PC-3 (cell line): ENCODE measurements at regions of chr6 and their contacts with region 1.

Region 1: DNA sequence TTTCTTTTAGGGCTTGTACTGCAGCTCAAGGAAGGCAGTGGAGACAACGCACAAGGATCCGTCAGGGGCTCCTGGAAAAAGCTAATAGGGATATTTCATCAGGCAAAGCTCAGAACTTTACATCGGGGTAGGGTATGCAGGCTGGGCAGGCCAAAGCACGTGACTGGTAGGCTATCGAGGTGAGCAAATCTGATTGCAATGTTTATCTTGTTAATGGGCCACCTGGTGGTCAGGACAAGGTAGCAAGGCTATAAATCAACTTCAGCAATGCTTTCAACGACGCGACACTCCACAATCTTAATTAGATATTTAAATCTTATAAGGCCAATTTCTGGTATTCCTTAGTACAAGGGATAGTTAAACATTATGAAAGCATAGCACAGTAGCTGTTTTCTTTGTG is 1302.8 kb upstream of the EYS start:
- DNase-seq: peak; percentile 22
- ATAC-seq: no peak
- H3K4me3 ChIP-seq: no peak overlapping the region
- H3K27ac ChIP-seq: no peak overlapping the region
- H3K4me1 ChIP-seq: no peaks in the 10 kb centered on the region
- H3K27me3 ChIP-seq: no peaks in the 10 kb centered on the region
- CTCF ChIP-seq: peak; percentile 54

Region 2: DNA sequence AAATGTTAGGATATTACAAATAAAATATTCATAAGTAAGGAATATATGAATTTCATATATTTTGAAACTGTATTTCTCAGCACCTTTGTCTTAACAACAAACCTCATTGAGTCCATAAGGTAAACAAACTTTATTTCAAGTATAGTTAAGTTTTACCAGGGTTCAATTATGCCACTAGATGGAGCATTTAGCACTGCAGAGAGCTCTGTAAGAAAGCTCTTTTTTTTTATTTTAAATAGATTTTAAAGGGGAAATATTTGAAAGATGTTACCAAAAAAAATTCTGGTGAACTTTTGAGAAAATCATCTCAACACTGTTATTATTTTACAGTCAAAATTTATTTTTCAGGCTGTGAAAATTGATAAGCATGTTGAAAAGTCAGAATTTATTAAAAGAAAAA is 347.6 kb before region 1 on chr6:
- CTCF ChIA-PET with region 1: no interaction called
- POLR2A ChIA-PET with region 1: no interaction called
- intact Hi-C with region 1: loop called (anchors 10 kb)
- DNase-seq: peak; percentile 52
- ATAC-seq: no peak; the same call in 1 of the 2 replicates
- H3K4me3 ChIP-seq: no peak overlapping the region
- H3K27ac ChIP-seq: no peak overlapping the region
- H3K4me1 ChIP-seq: no peaks in the 10 kb centered on the region
- H3K27me3 ChIP-seq: no peaks in the 10 kb centered on the region
- CTCF ChIP-seq: peak; percentile 60